Activated T-helper 2 cell treated with anti-CD3 and anti-CD28 coated beads, Interferon-gamma antibody, Interleukin-2, Interleukin-4, amounts not matched to agents 10 μg/mL and 5 μg/mL and 100 μg/mL, durations not matched to agents 14 hours and 24 hours and 36 hours (primary cell): ENCODE measurements at regions of chr2 and their contacts with region 1.

Region 1: DNA sequence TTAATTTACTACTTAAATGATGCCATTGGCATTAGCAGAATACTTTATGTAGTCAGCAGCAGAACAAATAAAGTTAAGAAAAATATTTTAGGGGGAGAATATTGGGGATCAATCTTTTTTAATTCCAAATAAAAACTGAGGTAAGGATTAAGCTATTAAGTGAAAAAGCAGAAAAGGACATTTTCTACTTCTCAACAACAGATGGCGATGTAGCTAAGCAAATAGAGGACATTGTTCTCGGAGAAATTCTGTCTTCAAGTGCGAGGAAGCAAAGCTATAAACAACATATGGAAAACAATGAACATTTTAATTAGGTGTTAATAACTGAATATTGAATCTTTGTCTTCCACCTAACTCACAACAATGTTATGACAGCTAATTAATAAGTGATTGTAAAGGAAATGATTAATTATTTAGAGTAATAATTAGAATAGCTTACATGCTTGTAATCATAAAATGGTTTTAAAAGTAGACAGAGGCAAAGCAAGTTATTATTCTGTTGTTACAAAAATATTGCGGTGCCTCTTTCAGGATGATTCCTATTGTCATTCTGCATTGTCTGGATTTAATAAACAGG is 32.9 kb upstream of the CCDC93 start:
- DNase-seq: no peak
- H3K4me3 Mint-ChIP-seq: no peak overlapping the region
- H3K27ac Mint-ChIP-seq: no peak overlapping the region
- H3K4me1 Mint-ChIP-seq: peaks cover 9% of the 10 kb centered on the region
- H3K27me3 Mint-ChIP-seq: peaks cover 42% of the 10 kb centered on the region

Region 2: GRCh38 chr2:118061135-118061955 is 14.6 kb after region 1 on chr2:
- intact Hi-C with region 1: loop called (anchors 2 kb)
- DNase-seq: no peak
- H3K4me3 Mint-ChIP-seq: no peak overlapping the region
- H3K27ac Mint-ChIP-seq: no peak overlapping the region
- H3K4me1 Mint-ChIP-seq: peaks cover 7% of the 10 kb centered on the region
- H3K27me3 Mint-ChIP-seq: peaks cover 38% of the 10 kb centered on the region

Region 3: GRCh38 chr2:118202707-118203303 is 156.1 kb after region 1 on chr2:
- intact Hi-C with region 1: loop called (anchors 5 kb)
- DNase-seq: peak; percentile 32
- H3K4me3 Mint-ChIP-seq: no peak overlapping the region
- H3K27ac Mint-ChIP-seq: no peak overlapping the region
- H3K4me1 Mint-ChIP-seq: peaks cover 9% of the 10 kb centered on the region
- H3K27me3 Mint-ChIP-seq: peaks cover 19% of the 10 kb centered on the region

Region 4: DNA sequence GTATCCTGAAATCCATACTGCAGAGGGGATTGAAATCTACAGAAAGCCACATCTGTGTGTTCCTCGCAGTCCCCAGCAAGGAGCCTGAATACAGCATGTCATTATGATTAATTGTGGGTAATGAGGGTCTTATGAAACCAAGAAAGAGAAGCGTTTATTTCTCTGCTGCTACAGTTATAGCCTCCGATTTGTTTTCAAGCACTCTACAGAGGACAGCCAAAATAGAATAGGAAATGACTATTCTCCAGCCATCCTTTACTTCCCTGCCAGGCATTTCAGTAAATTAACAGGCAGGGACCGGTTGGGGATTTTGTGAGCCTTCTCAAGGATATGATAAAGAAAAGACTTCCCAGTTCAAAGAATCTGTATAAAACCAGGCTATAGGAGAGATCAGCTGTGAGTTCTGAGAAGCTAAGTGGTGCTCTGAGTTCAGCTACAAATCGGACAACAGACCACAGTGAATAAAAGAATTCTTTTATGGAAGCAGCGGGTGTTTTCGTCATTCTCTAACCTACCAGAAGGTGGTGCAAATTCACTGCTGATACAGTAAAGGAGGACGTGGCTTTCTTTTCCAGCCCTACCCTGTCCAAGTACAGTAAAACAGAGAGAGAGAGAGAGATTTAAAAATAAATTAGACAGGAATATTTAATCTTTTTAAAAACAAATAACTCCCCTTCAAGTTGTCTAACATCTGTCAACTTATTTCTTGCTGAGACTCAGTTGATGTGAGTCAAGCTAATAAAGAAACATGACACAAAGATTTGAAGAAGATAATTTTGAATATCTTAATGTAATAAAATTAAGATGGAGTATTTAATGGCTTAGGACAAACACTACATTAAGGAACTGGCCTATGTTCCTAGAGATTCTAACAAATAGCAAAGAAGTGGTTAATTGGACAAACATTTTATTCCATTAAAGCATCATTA is 175.2 kb after region 1 on chr2:
- intact Hi-C with region 1: loop called (anchors 5 kb)
- DNase-seq: no peak
- H3K4me3 Mint-ChIP-seq: no peak overlapping the region
- H3K27ac Mint-ChIP-seq: no peak overlapping the region
- H3K4me1 Mint-ChIP-seq: peaks cover 19% of the 10 kb centered on the region
- H3K27me3 Mint-ChIP-seq: peaks cover 65% of the 10 kb centered on the region